ENCODE measurements at regions of chr19 and their contacts with region 1.

Region 1: DNA sequence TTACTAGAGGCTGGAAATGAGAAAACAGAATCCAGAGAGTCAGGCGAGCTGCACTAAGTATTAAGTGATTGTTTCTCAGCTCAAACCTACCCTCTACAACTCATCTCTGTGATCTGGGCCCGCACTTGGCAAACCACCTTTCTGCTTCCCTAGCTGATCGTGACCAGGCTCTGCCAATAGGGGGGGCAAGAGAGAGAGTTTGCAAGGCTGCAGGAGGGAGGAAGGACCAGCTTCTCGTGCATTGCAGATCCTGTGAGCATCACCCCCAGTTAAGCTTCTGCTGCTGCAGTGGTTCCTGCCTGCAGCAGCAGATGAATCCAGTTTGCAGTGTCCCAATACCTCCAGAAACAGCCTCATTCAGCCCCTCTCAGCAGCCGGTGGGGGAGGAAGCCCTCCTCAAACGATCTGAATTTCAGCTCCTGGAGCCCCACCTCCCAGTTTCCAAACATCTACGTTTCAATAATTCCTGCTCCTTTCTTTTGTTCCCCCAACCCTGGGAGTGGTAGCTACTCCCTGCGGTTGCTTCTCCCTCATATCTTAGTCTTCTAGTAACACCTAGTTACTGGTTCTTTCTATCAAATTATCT is 20.0 kb downstream of the XRCC1 start:
- DNase-seq: peak; percentile 76 to 91 (median 82)
- ATAC-seq: peak; percentile 100
- H3K4me3 ChIP-seq: no peak overlapping the region
- H3K4me3 Mint-ChIP-seq: peak overlapping the region; percentile 8
- H3K27ac ChIP-seq: no peak overlapping the region
- H3K27ac Mint-ChIP-seq: peak overlapping the region; percentile 15
- H3K4me1 ChIP-seq: peaks cover 7% of the 10 kb centered on the region
- H3K4me1 Mint-ChIP-seq: peaks cover 13% of the 10 kb centered on the region
- H3K27me3 ChIP-seq: no peaks in the 10 kb centered on the region
- H3K27me3 Mint-ChIP-seq: no peaks in the 10 kb centered on the region
- CTCF ChIP-seq: peak; percentile 82

Region 2: DNA sequence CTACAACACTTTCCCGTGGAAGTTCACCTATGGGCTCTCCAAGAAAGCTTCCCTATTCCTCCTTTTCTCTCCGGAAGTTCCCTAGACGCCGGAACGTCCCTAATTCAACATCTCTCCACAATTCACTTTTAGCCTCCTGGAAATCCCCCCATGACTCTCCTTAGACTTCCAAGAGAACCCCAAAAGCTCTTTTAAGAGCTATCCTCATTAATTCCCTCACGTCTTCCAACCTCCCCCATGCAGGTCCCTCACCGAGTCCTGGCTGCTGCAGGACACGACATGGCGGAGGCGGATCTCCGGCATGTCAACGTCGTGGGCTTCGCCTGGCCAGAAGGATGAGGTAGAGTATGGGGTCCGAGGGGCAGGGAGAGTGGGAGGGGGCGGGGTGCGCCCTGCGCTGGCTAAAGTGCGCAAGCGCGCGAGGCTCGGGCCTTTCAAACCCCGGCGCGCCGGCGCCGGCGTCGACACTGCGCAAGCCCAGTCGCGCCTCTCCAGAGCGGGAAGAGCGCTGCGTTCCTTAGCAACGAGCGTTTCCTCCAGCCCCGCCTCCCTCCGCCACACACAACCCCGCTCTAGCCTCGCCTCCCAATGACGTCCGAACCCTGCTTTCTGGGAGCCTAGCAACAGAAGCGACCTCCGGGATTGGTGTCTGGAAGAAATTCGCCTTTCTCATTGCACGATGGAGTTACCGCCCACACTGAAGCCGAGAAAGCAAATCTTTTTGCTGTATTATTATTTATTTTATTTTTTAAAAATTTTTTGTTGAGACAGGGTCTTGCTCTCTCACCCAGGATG is 20.1 kb after region 1 on chr19 and contains the starts of genes PINLYP and XRCC1:
- CTCF ChIA-PET with region 1: interaction called, 22 read pairs
- POLR2A ChIA-PET with region 1: interaction called, 3 read pairs
- intact Hi-C with region 1: loop called in 1 of 2 experiments (anchors 1 kb)
- DNase-seq: peak; percentile 93 to 100 (median 96)
- ATAC-seq: peak; percentile 98
- H3K4me3 ChIP-seq: peak within 1 kb of the TSS; percentile 90
- H3K4me3 Mint-ChIP-seq: peak within 1 kb of the TSS; percentile 98
- H3K27ac ChIP-seq: peak within 1 kb of the TSS; percentile 81 to 94
- H3K27ac Mint-ChIP-seq: peak within 1 kb of the TSS; percentile 96
- H3K4me1 ChIP-seq: peaks cover 33% of the 10 kb centered on the region
- H3K4me1 Mint-ChIP-seq: peaks cover 58% of the 10 kb centered on the region
- H3K27me3 ChIP-seq: no peaks in the 10 kb centered on the region
- H3K27me3 Mint-ChIP-seq: no peaks in the 10 kb centered on the region
- CTCF ChIP-seq: no peak
- total RNA-seq, gene PINLYP: not detected
- total RNA-seq, gene XRCC1: 25.1 to 26.2 TPM

Region 3: DNA sequence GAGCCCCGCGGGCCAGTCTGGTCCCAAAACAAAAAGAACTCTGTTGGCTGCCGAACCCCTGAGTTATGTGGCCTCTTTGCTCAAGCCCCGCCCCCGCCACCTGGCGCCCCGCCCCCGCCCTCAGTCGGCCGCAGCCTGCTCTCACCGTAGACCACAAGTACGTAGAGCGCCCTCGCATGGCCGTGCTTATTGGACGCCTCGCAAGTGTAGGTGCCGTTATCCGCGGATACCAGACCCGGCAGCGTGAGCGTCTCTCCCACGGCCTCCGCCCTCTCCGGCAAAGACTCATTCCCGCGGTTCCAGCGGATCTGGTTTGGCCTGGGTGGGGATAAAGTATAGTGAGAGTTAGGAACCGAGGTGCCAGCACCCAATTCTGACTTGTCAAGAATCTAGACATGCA is 69.7 kb after region 1 on chr19:
- CTCF ChIA-PET with region 1: interaction called, 4 read pairs
- POLR2A ChIA-PET with region 1: no interaction called
- intact Hi-C with region 1: loop called in 1 of 2 experiments (anchors 1 kb)
- DNase-seq: peak; percentile 72 to 93 (median 86)
- ATAC-seq: peak; percentile 93
- H3K4me3 ChIP-seq: no peak overlapping the region
- H3K4me3 Mint-ChIP-seq: peak overlapping the region; percentile 60
- H3K27ac ChIP-seq: no peak overlapping the region
- H3K27ac Mint-ChIP-seq: peak overlapping the region; percentile 51
- H3K4me1 ChIP-seq: peaks cover 27% of the 10 kb centered on the region
- H3K4me1 Mint-ChIP-seq: peaks cover 37% of the 10 kb centered on the region
- H3K27me3 ChIP-seq: peaks cover 0 to 6% of the 10 kb centered on the region in 2 experiments
- H3K27me3 Mint-ChIP-seq: peaks cover 7% of the 10 kb centered on the region
- CTCF ChIP-seq: peak; percentile 52

Region 4: DNA sequence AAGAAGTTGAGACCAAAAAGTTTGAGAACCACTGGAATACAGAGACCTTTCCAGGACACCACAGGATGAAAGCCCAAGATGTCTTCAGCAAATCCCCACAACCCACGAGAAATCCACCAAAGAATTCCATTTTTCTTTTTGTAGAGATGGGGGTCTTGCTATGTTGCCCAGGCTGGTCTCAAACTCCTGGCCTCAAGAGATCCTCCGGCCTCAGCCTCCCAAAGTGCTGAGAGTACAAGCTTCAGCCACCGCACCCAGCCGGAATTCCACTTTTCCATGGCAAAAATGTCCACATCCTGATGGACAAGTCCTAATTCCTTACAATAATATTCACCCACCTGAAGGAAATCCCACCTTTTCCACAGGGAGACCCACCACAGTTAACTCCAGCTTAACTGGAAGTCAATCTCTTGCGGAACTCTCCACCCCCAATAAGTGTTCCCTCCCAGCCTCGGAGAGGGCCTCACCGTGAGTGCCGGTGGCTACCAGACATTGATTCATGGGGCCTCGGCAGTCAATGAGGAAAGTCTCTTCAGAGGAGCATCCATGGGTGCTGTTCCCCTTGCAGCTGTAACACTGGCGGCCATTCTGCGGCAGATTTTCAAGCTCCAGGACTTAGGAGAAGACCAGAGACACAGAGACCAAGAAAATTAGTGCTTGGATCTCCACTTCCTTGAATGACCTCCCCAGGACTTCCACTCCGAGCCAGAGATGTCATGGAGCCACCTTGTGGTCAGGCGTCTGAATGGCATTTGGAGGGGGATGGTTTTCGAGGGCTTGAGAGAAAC is 96.7 kb after region 1 on chr19:
- CTCF ChIA-PET with region 1: no interaction called
- POLR2A ChIA-PET with region 1: no interaction called
- intact Hi-C with region 1: loop called in 1 of 2 experiments (anchors 2 kb)
- DNase-seq: peak in 8 of 14 experiments; percentile 5 to 72 (median 40)
- ATAC-seq: peak; percentile 32
- H3K4me3 ChIP-seq: no peak overlapping the region
- H3K4me3 Mint-ChIP-seq: no peak overlapping the region
- H3K27ac ChIP-seq: no peak overlapping the region
- H3K27ac Mint-ChIP-seq: no peak overlapping the region
- H3K4me1 ChIP-seq: no peaks in the 10 kb centered on the region
- H3K4me1 Mint-ChIP-seq: no peaks in the 10 kb centered on the region
- H3K27me3 ChIP-seq: no peaks in the 10 kb centered on the region
- H3K27me3 Mint-ChIP-seq: no peaks in the 10 kb centered on the region
- CTCF ChIP-seq: peak; percentile 58

Region 5: GRCh38 chr19:43784981-43785808 is 229.9 kb after region 1 on chr19:
- CTCF ChIA-PET with region 1: no interaction called
- POLR2A ChIA-PET with region 1: no interaction called
- intact Hi-C with region 1: loop called in 1 of 2 experiments (anchors 10 kb)
- DNase-seq: peak in 11 of 14 experiments; percentile 21 to 83 (median 41)
- ATAC-seq: peak; percentile 51
- H3K4me3 ChIP-seq: peak overlapping the region; percentile 3
- H3K4me3 Mint-ChIP-seq: peak overlapping the region; percentile 71
- H3K27ac ChIP-seq: peak overlapping the region; percentile 70 to 75
- H3K27ac Mint-ChIP-seq: peak overlapping the region; percentile 90
- H3K4me1 ChIP-seq: peaks cover 50% of the 10 kb centered on the region
- H3K4me1 Mint-ChIP-seq: peaks cover 45% of the 10 kb centered on the region
- H3K27me3 ChIP-seq: no peaks in the 10 kb centered on the region
- H3K27me3 Mint-ChIP-seq: peaks cover 5% of the 10 kb centered on the region
- CTCF ChIP-seq: peak; percentile 95